Activated CD8-positive, alpha-beta T cell treated with anti-CD3 and anti-CD28 coated beads for 36 hours (primary cell): ENCODE measurements at regions of chr15 and their contacts with region 1.

Region 1: GRCh38 chr15:45402162-45402954 is 24.0 kb upstream of the GATM start:
- DNase-seq: peak; percentile 96
- ATAC-seq: peak; percentile 97
- H3K4me3 Mint-ChIP-seq: peak overlapping the region; percentile 97
- H3K27ac Mint-ChIP-seq: peak overlapping the region; percentile 93
- H3K4me1 Mint-ChIP-seq: peaks cover 27% of the 10 kb centered on the region
- H3K27me3 Mint-ChIP-seq: no peaks in the 10 kb centered on the region
- CTCF ChIP-seq: no peak

Region 2: GRCh38 chr15:45187894-45188830 is 214.2 kb before region 1 on chr15 and contains the start of gene SHF:
- CTCF ChIA-PET with region 1: no interaction called
- POLR2A ChIA-PET with region 1: interaction called, 11 read pairs
- intact Hi-C with region 1: no loop called
- DNase-seq: peak; percentile 92
- ATAC-seq: peak; percentile 81
- H3K4me3 Mint-ChIP-seq: peak within 1 kb of the TSS; percentile 77
- H3K27ac Mint-ChIP-seq: peak within 1 kb of the TSS; percentile 92
- H3K4me1 Mint-ChIP-seq: peaks cover 28% of the 10 kb centered on the region
- H3K27me3 Mint-ChIP-seq: no peaks in the 10 kb centered on the region
- CTCF ChIP-seq: no peak
- total RNA-seq, gene SHF: 19.8 to 23.5 TPM

Region 3: GRCh38 chr15:45307230-45307924 is 95.0 kb before region 1 on chr15:
- CTCF ChIA-PET with region 1: interaction called, 5 read pairs
- POLR2A ChIA-PET with region 1: no interaction called
- intact Hi-C with region 1: loop called (anchors 5 kb)
- DNase-seq: no peak
- ATAC-seq: peak; percentile 17
- H3K4me3 Mint-ChIP-seq: peak overlapping the region; percentile 5
- H3K27ac Mint-ChIP-seq: no peak overlapping the region
- H3K4me1 Mint-ChIP-seq: peaks cover 3% of the 10 kb centered on the region
- H3K27me3 Mint-ChIP-seq: peaks cover 22% of the 10 kb centered on the region
- CTCF ChIP-seq: peak; percentile 50

Region 4: GRCh38 chr15:45386420-45386819 is 15.9 kb before region 1 on chr15:
- CTCF ChIA-PET with region 1: interaction called, 25 read pairs
- POLR2A ChIA-PET with region 1: interaction called, 12 read pairs
- intact Hi-C with region 1: no loop called
- DNase-seq: no peak
- ATAC-seq: no peak
- H3K4me3 Mint-ChIP-seq: no peak overlapping the region
- H3K27ac Mint-ChIP-seq: no peak overlapping the region
- H3K4me1 Mint-ChIP-seq: no peaks in the 10 kb centered on the region
- H3K27me3 Mint-ChIP-seq: peaks cover 1% of the 10 kb centered on the region
- CTCF ChIP-seq: no peak

Region 5: GRCh38 chr15:45429974-45430792 is 27.8 kb after region 1 on chr15:
- CTCF ChIA-PET with region 1: interaction called, 11 read pairs
- POLR2A ChIA-PET with region 1: no interaction called
- intact Hi-C with region 1: no loop called
- DNase-seq: peak; percentile 87
- ATAC-seq: peak; percentile 96
- H3K4me3 Mint-ChIP-seq: peak overlapping the region; percentile 38
- H3K27ac Mint-ChIP-seq: no peak overlapping the region
- H3K4me1 Mint-ChIP-seq: peaks cover 2% of the 10 kb centered on the region
- H3K27me3 Mint-ChIP-seq: peaks cover 9% of the 10 kb centered on the region
- CTCF ChIP-seq: peak; percentile 100

Region 6: DNA sequence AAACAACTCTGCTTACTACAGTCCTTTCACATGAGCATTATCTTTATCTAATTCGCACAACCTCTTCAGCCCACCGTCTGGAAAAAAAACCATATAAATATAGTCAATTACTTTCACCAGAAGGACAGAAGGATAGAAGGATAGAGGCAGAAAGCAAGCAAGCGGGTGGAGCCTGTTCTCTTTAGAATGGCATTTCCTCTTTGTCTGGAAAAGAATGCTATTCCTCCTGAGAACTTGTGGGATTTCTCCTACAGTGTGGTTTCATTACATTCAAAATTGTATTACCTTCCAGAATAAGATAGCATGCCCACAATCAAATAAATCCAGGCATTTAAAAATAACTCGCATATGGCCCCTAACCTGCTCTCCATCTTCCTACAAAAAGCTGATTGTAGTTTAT is 97.1 kb after region 1 on chr15:
- CTCF ChIA-PET with region 1: no interaction called
- POLR2A ChIA-PET with region 1: no interaction called
- intact Hi-C with region 1: no loop called
- DNase-seq: no peak
- ATAC-seq: no peak
- H3K4me3 Mint-ChIP-seq: no peak overlapping the region
- H3K27ac Mint-ChIP-seq: no peak overlapping the region
- H3K4me1 Mint-ChIP-seq: no peaks in the 10 kb centered on the region
- H3K27me3 Mint-ChIP-seq: no peaks in the 10 kb centered on the region
- CTCF ChIP-seq: no peak